BJ (cell line): ENCODE measurements at regions of chr10 and their contacts with region 1.

Region 1: DNA sequence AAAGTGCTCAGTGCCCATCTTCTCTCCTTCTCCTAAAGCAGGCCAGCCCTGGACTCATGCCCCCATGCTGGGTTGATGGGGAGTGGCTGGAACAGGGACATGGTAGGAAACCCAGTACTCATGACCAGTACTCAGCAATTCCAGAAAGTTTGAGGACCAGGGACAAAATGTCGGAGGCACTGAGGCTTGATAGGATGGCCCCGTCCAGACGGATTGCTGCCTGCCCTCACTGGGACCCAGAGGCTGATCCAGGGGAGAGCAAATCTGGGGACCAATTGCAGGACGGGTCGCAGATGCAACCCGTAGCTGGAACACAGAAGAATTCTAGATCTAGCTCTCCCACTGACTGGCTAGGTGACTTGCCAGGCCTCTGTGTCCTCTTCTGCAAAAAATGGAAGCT is 5.1 kb downstream of the ZCCHC24 start:
- DNase-seq: no peak
- H3K4me3 ChIP-seq: no peak overlapping the region
- H3K27me3 ChIP-seq: no peaks in the 10 kb centered on the region
- CTCF ChIP-seq: no peak

Region 2: DNA sequence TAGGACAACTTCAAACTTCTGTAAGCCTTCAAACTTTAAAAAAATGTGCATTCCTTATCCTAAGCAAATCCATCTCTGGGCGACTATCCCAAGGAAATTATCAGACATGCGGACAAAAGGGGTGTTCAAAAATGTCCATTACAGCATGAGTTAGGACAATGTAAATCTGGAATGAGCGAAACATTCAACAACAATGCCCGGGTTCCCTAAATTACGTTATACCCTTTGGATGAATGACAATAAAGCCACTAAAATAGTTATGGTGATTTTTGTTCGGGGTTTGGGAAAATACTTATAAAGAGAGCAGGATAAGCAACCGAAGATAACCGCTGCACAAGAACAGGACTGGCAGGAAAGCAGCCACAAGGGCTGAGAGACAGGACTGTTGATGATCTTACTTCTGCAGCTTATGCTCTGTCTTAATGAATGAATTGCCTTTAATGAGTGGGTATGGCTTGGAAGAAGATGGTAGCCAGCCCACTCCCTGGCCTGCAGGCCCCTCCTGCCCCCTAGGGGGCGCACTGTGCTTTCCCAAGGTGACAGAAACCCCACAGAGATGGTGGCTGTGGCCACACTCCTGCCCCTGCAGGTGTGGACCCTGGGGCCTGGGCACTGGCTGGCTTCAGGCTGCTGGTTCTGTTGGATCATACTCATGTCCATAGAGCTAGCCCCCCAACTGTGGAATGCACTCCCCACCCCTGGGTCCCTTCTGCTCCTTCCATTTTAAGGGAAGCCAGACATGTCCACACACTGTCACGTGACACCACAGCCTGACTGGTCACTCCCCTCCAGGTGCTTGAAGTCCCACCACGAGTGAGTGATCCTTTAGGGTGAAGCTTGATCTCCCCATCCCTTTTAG is 39.9 kb before region 1 on chr10:
- CTCF ChIA-PET with region 1: interaction called, 6 read pairs
- POLR2A ChIA-PET with region 1: interaction called, 10 read pairs
- DNase-seq: no peak
- H3K4me3 ChIP-seq: no peak overlapping the region; the same call in 1 of the 2 replicates
- H3K27me3 ChIP-seq: no peaks in the 10 kb centered on the region
- CTCF ChIP-seq: peak; percentile 79